ENCODE measurements at regions of chr1 and their contacts with region 1.

Region 1: DNA sequence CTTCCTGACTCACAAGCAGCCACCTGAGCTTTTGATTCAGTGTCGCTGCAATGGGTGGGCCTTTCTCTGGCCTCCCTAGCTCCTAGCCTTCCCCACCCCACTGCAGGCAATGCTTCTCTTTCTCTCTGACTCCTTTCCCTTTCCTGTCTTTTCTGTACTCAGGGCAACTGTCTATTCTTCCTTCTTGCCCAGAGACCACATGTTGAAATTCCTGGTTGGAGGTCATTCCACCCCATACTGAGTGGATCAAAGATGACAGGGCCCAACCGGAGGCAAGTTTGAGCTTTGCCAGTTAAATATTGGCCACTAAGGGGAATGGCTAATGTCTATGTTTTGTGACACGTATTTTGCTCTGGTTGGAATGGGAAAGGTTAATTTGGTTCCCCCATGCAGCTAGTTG is 65.2 kb upstream of the ARID1A start:
- DNase-seq: no peak

Region 2: DNA sequence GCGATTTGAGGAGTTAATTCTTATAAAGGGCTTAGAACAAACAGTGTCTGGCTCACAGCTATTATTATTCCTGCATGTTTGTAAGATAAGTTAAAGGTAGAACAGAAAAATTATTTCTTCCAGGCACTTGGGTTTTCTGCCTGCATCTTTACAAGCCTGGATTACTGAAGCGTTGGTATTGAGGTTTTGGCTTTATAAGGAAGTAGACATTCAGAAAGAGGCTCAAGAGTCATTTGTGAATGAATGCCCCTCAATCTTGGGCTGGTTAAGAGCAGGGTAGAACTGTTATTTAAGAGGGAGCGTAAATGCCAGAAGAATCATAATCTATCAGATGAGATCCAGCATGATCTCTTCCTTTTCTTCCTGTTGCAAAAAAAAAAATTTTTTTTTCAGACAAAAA is 12.1 kb before region 1 on chr1:
- intact Hi-C with region 1: no loop called
- DNase-seq: no peak

Region 3: DNA sequence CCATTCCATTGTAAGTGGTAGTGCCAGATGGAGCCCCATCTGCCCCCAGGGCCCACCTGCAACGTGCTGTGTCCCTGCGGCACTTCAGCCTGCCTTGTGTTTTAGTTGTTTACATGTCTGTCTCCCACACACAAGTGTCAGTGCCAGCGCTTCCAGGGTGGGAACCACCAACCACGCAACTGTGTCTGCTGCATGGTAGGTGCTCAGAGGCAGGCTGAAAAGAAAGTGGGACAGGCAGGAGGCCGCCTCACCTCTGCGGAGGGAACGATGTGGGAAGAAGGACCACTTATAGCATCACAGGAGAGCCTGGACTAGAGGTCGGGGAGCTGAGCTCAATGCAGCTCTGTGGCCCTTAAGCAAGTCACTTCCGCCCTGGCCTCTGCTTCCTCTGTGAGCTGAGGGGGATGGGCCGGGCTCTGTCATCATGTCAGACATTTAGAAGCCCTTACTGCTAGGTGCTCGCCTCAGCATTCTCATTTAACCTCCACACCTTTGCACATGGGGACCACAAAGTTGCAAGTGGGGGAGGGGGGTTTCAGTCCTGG is 506.4 kb after region 1 on chr1:
- intact Hi-C with region 1: loop called in 1 of 2 experiments (anchors 5 kb)
- DNase-seq: peak; percentile 90

Measured in posterior vena cava (tissue), 2 donors.